Endothelial cell of umbilical vein (primary cell): ENCODE measurements at regions of chr10 and their contacts with region 1.

Region 1: GRCh38 chr10:27041196-27041595 is 59.1 kb downstream of the ANKRD26 start:
- DNase-seq: peak; percentile 73
- H3K4me3 ChIP-seq: no peak overlapping the region
- H3K27ac ChIP-seq: peak overlapping the region; percentile 47
- H3K4me1 ChIP-seq: peaks cover 4% of the 10 kb centered on the region
- H3K27me3 ChIP-seq: no peaks in the 10 kb centered on the region
- CTCF ChIP-seq: no peak
- POLR2A ChIP-seq: no peak

Region 2: DNA sequence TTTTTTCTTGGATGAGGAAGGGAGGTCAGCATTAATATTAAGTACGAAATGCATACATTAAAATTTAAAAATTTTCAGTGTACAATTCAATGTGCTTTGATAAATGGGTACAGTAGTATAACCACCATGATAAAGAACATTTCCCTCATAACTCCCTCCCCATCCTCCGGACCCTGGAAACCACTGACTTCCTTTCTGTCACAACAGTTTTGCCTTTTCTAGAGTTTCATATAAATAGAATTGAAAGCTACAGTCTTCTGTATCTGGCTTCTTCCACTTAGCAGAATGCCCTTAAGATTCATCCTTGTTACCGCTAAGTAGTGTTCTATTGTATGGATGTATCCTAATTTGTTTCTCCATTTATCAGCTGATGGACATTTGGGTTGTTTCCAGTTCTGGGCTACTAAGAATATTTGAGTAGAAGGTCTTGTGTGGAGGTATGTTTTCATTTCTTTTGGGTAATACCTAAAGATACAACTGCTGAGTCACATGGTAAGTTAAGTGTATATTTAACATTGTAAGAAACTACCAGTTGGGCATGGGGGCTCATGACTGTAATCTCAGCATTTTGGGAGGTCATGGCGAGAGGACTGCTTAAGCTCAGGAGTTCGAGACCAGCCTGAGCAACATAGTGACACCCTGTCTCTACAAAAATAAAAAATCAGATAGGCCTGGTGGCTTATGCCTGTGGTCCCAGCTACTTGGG is 211.2 kb before region 1 on chr10:
- CTCF ChIA-PET with region 1: no interaction called
- POLR2A ChIA-PET with region 1: no interaction called
- dilution Hi-C with region 1: no loop called
- intact Hi-C with region 1: no loop called
- DNase-seq: no peak
- H3K4me3 ChIP-seq: no peak overlapping the region
- H3K27ac ChIP-seq: no peak overlapping the region
- H3K4me1 ChIP-seq: no peaks in the 10 kb centered on the region
- H3K27me3 ChIP-seq: no peaks in the 10 kb centered on the region
- CTCF ChIP-seq: no peak
- POLR2A ChIP-seq: no peak

Region 3: DNA sequence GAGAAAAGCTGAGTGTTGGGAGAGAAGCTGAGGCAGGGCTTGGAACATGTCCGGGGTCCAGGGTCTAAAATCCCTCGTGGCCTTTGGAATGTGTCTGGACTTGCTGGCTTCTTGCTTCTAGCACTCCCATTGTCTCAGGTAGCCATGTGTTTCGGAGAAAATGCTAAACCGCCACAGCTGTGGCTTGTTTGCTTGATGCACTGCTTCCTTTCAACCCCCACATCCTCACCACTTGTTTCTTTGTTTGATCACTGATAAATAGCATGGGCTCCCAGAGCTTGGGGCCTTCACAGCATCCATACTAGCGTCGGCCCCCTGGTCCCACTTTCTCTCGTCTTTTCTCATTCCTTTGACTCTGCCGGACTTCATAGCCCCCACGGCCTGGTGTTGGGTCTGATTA is 43.6 kb before region 1 on chr10:
- CTCF ChIA-PET with region 1: no interaction called
- POLR2A ChIA-PET with region 1: no interaction called
- dilution Hi-C with region 1: no loop called
- intact Hi-C with region 1: loop called (anchors 1 kb)
- DNase-seq: no peak
- H3K4me3 ChIP-seq: no peak overlapping the region
- H3K27ac ChIP-seq: no peak overlapping the region
- H3K4me1 ChIP-seq: no peaks in the 10 kb centered on the region
- H3K27me3 ChIP-seq: no peaks in the 10 kb centered on the region
- CTCF ChIP-seq: no peak
- POLR2A ChIP-seq: no peak

Region 4: DNA sequence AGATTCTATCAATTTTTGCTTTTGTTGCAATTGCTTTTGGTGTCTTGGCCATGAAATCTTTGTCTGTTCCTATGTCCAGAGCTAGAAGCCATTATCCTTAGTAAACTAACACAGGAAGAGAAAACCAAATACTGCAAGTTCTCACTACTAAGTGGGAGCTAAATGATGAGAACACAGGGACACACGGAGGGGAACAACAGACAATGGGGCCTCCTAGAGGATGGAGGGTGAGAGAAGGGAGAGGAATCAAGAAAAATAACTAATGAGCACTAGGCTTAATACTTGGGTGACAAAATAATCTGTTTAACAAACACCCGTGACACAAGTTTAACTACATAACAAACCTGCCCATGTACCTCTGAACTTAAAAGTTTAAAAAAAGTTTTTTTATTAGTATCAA is 19.1 kb before region 1 on chr10:
- CTCF ChIA-PET with region 1: no interaction called
- POLR2A ChIA-PET with region 1: no interaction called
- dilution Hi-C with region 1: no loop called
- intact Hi-C with region 1: loop called (anchors 2 kb)
- DNase-seq: no peak
- H3K4me3 ChIP-seq: no peak overlapping the region
- H3K27ac ChIP-seq: no peak overlapping the region
- H3K4me1 ChIP-seq: peaks cover 24% of the 10 kb centered on the region
- H3K27me3 ChIP-seq: no peaks in the 10 kb centered on the region
- CTCF ChIP-seq: no peak
- POLR2A ChIP-seq: no peak

Region 5: DNA sequence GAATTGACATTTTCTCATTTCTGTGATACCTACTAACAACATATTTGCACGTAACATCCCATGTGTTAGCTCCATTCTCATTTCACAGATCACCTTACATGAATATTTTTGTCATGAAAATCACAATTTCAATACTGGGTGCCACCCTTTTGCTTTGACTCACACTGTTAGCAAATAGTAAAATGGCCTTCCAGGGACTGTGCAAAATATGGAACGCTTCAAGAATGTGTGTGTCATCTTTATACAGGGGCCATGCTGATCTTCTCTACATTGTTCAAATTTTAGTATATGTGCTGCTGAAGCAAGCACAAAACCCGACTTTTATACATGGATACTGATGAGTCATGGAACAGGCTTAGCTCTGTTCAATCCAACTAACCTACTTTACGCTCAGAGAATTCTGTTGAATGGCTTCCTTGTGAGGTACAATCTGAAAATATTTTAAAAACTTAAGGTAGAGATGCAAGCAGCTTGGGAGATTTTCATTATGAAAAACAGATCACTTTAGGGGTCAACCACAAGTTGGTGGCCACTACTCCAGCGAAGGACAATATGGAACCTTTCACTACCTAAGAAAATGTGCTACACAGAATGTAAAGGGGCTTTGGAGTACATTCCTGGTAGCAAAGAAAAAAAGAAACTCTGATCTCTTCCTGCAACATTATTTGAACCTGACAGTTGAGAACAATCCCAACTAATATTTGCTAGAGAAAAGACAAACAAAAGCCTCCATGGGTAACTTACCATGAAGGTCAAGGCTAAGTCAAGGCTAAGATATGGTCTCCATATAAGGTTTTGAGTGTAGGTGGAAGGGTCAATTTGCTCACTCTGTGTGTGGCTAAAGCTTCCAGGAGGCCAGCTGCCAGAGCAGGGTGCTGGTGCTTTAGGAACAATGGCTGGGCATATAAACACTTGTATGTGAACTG is 47.2 kb after region 1 on chr10:
- CTCF ChIA-PET with region 1: no interaction called
- POLR2A ChIA-PET with region 1: no interaction called
- dilution Hi-C with region 1: no loop called
- intact Hi-C with region 1: no loop called
- DNase-seq: no peak
- H3K4me3 ChIP-seq: no peak overlapping the region
- H3K27ac ChIP-seq: no peak overlapping the region
- H3K4me1 ChIP-seq: no peaks in the 10 kb centered on the region
- H3K27me3 ChIP-seq: no peaks in the 10 kb centered on the region
- CTCF ChIP-seq: no peak
- POLR2A ChIP-seq: no peak